ENCODE measurements at regions of chr4 and their contacts with region 1.

Region 1: DNA sequence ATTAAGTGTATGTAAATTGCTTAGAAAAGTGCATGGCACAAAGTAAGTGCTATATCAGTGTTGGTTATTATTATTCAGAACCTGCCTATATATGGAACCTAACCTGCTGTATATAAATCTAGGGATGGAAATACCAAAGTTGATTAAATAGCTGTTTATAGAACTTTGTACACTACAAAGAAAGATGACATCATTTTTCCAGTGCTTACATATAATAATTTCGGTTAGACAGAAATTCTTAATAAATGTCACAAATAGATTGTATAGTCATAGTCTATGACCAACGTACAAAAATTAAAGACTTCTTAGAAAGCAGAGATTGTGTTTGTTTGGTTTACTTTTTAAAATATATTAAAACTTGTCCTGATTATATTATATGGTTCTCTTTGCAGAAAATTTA is 4.4 kb downstream of the GYPB start:
- DNase-seq: no peak
- ATAC-seq: no peak
- H3K4me3 ChIP-seq: no peak overlapping the region
- H3K27ac ChIP-seq: no peak overlapping the region
- H3K4me1 ChIP-seq: no peaks in the 10 kb centered on the region
- H3K27me3 ChIP-seq: no peaks in the 10 kb centered on the region
- CTCF ChIP-seq: no peak

Region 2: GRCh38 chr4:143260750-143261149 is 754.1 kb before region 1 on chr4:
- CTCF ChIA-PET with region 1: no interaction called
- POLR2A ChIA-PET with region 1: no interaction called
- intact Hi-C with region 1: no loop called
- DNase-seq: no peak
- ATAC-seq: no peak
- H3K4me3 ChIP-seq: no peak overlapping the region
- H3K27ac ChIP-seq: no peak overlapping the region
- H3K4me1 ChIP-seq: peaks cover 9% of the 10 kb centered on the region
- H3K27me3 ChIP-seq: no peaks in the 10 kb centered on the region
- CTCF ChIP-seq: no peak

Region 3: GRCh38 chr4:143773998-143774895 is 240.6 kb before region 1 on chr4:
- CTCF ChIA-PET with region 1: no interaction called
- POLR2A ChIA-PET with region 1: no interaction called
- intact Hi-C with region 1: loop called (anchors 5 kb)
- DNase-seq: peak; percentile 78
- ATAC-seq: peak; percentile 86
- H3K4me3 ChIP-seq: no peak overlapping the region
- H3K27ac ChIP-seq: no peak overlapping the region
- H3K4me1 ChIP-seq: no peaks in the 10 kb centered on the region
- H3K27me3 ChIP-seq: peaks cover 16% of the 10 kb centered on the region
- CTCF ChIP-seq: peak; percentile 87